CD8-positive, alpha-beta T cell (primary cell): ENCODE measurements at regions of chr10 and their contacts with region 1.

Region 1: GRCh38 chr10:100046021-100046486 is 35.6 kb downstream of the CPN1 start:
- DNase-seq: peak; percentile 58 to 87 (median 78)
- ATAC-seq: peak; percentile 67
- H3K4me3 ChIP-seq: no peak overlapping the region
- H3K4me3 Mint-ChIP-seq: no peak overlapping the region
- H3K27ac ChIP-seq: no peak overlapping the region
- H3K27ac Mint-ChIP-seq: no peak overlapping the region
- H3K4me1 ChIP-seq: no peaks in the 10 kb centered on the region
- H3K4me1 Mint-ChIP-seq: no peaks in the 10 kb centered on the region
- H3K27me3 ChIP-seq: no peaks in the 10 kb centered on the region
- H3K27me3 Mint-ChIP-seq: no peaks in the 10 kb centered on the region
- CTCF ChIP-seq: peak; percentile 83

Region 2: GRCh38 chr10:99834410-99834809 is 211.6 kb before region 1 on chr10:
- CTCF ChIA-PET with region 1: interaction called, 10 read pairs
- POLR2A ChIA-PET with region 1: no interaction called
- intact Hi-C with region 1: no loop called
- DNase-seq: no peak
- ATAC-seq: no peak
- H3K4me3 ChIP-seq: no peak overlapping the region
- H3K4me3 Mint-ChIP-seq: no peak overlapping the region
- H3K27ac ChIP-seq: no peak overlapping the region
- H3K27ac Mint-ChIP-seq: no peak overlapping the region
- H3K4me1 ChIP-seq: no peaks in the 10 kb centered on the region
- H3K4me1 Mint-ChIP-seq: no peaks in the 10 kb centered on the region
- H3K27me3 ChIP-seq: no peaks in the 10 kb centered on the region
- H3K27me3 Mint-ChIP-seq: no peaks in the 10 kb centered on the region
- CTCF ChIP-seq: no peak

Region 3: DNA sequence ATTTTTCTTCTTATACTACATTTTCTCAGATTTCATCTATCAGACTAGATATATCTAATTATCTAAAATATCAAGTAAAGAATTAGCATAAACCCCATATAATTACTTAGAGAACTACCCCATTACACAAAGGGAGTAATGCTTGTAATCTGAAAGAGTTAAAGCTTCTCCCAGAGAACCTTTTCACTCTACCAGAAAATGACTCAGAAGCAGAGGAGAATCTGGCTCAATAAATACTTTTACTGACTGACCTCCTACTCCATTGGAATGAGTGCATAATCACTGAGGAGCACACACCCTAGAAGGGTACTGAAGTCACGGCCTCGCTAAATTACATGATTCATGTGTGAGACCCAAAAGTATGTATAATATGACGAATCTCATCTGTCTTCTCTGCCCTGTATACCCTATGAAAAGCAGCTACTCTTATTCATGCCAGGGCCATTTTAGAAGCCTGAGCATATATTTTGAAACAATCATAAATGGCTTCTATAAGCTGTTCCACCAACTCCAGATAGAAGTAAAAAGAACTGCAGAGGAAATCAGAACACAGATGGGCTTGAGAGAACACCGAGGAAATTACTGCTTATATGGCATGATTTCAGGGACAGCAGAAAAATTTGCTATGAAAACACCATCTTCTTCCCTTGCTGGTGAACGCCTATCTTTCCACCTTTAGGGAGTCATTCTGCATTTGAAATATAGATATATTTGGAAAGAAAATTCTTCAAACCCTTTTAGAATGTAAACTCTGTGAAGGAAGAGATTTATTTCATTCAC is 69.0 kb before region 1 on chr10:
- CTCF ChIA-PET with region 1: interaction called, 6 read pairs
- POLR2A ChIA-PET with region 1: no interaction called
- intact Hi-C with region 1: loop called (anchors 1 to 5 kb)
- DNase-seq: no peak
- ATAC-seq: no peak
- H3K4me3 ChIP-seq: no peak overlapping the region
- H3K4me3 Mint-ChIP-seq: no peak overlapping the region
- H3K27ac ChIP-seq: no peak overlapping the region
- H3K27ac Mint-ChIP-seq: no peak overlapping the region
- H3K4me1 ChIP-seq: no peaks in the 10 kb centered on the region
- H3K4me1 Mint-ChIP-seq: no peaks in the 10 kb centered on the region
- H3K27me3 ChIP-seq: no peaks in the 10 kb centered on the region
- H3K27me3 Mint-ChIP-seq: no peaks in the 10 kb centered on the region
- CTCF ChIP-seq: no peak

Region 4: GRCh38 chr10:100020142-100020885 is 25.7 kb before region 1 on chr10:
- CTCF ChIA-PET with region 1: interaction called, 13 read pairs
- POLR2A ChIA-PET with region 1: no interaction called
- intact Hi-C with region 1: no loop called
- DNase-seq: peak in 2 of 9 experiments; percentile 10 to 33
- ATAC-seq: peak; percentile 62
- H3K4me3 ChIP-seq: no peak overlapping the region
- H3K4me3 Mint-ChIP-seq: no peak overlapping the region
- H3K27ac ChIP-seq: no peak overlapping the region
- H3K27ac Mint-ChIP-seq: peak overlapping the region; percentile 20
- H3K4me1 ChIP-seq: no peaks in the 10 kb centered on the region
- H3K4me1 Mint-ChIP-seq: peaks cover 5% of the 10 kb centered on the region
- H3K27me3 ChIP-seq: no peaks in the 10 kb centered on the region
- H3K27me3 Mint-ChIP-seq: peaks cover 3% of the 10 kb centered on the region
- CTCF ChIP-seq: no peak

Region 5: DNA sequence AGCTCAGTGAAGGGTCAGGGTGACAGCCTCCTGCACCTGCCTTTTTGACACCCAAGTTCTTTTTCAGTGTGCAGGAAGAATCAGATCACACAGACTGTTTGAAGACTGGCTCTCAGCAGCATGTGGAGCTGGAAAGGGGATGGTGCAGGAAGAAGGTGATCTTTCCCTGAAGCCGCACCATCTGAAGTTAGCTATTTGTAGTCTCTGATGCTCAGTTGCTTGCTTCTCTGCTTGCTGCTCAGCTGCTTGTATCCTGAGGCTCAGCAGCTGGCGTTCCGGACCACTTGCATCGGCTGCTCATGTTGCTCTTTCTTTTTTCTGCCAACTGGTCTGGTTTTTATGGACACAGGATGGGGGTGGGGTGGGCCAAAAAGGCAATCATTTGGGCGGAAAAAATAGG is 20.5 kb before region 1 on chr10:
- CTCF ChIA-PET with region 1: interaction called, 13 read pairs
- POLR2A ChIA-PET with region 1: no interaction called
- intact Hi-C with region 1: no loop called
- DNase-seq: no peak
- ATAC-seq: no peak
- H3K4me3 ChIP-seq: no peak overlapping the region
- H3K4me3 Mint-ChIP-seq: no peak overlapping the region
- H3K27ac ChIP-seq: no peak overlapping the region
- H3K27ac Mint-ChIP-seq: no peak overlapping the region
- H3K4me1 ChIP-seq: no peaks in the 10 kb centered on the region
- H3K4me1 Mint-ChIP-seq: peaks cover under 1% of the 10 kb centered on the region
- H3K27me3 ChIP-seq: peaks cover 0 to 2% of the 10 kb centered on the region in 2 experiments
- H3K27me3 Mint-ChIP-seq: peaks cover 4% of the 10 kb centered on the region
- CTCF ChIP-seq: no peak

Region 6: DNA sequence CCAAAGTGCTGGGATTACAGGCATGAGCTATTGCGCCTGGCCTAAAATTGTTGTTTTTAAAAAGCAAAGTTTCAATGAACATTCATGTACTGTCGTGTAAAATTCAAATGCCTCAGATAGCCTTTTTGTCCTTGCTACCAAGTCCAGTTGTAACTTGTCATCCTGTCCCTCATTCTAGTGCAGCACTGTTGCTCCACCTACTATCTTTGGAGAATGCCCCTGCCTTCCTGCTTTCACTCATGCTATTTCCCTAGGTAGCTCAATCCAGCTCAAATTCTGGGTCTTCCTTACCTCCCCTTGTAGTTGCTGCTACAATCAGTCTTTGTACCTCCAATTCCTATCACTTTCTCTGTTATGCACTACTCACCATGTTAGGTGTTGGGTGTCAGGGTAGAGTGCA is 38.8 kb after region 1 on chr10:
- CTCF ChIA-PET with region 1: no interaction called
- POLR2A ChIA-PET with region 1: no interaction called
- intact Hi-C with region 1: no loop called
- DNase-seq: no peak
- ATAC-seq: no peak
- H3K4me3 ChIP-seq: no peak overlapping the region
- H3K4me3 Mint-ChIP-seq: no peak overlapping the region
- H3K27ac ChIP-seq: no peak overlapping the region
- H3K27ac Mint-ChIP-seq: no peak overlapping the region
- H3K4me1 ChIP-seq: no peaks in the 10 kb centered on the region
- H3K4me1 Mint-ChIP-seq: no peaks in the 10 kb centered on the region
- H3K27me3 ChIP-seq: no peaks in the 10 kb centered on the region
- H3K27me3 Mint-ChIP-seq: peaks cover 28% of the 10 kb centered on the region
- CTCF ChIP-seq: no peak

Region 7: DNA sequence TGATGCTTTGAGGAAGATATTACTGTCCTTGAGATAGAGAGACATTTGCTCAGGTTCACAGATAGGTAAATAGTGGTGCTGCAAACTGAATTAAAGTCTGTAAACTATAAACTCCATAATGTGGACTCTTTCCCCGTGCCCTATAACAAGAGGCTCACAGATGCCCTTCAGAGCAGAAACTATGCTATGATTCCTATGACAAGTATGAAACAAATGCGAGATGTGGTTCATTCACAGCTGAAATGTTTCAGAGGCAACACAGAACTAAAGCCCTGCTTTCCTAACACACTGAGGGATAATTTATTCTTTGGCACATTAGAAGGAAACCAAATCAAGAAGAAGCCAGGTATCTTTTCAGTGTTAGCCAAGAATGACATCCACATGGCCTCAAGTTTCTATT is 170.0 kb after region 1 on chr10:
- CTCF ChIA-PET with region 1: no interaction called
- POLR2A ChIA-PET with region 1: no interaction called
- intact Hi-C with region 1: no loop called
- DNase-seq: no peak
- ATAC-seq: no peak
- H3K4me3 ChIP-seq: no peak overlapping the region
- H3K4me3 Mint-ChIP-seq: no peak overlapping the region
- H3K27ac ChIP-seq: no peak overlapping the region
- H3K27ac Mint-ChIP-seq: no peak overlapping the region
- H3K4me1 ChIP-seq: no peaks in the 10 kb centered on the region
- H3K4me1 Mint-ChIP-seq: no peaks in the 10 kb centered on the region
- H3K27me3 ChIP-seq: no peaks in the 10 kb centered on the region
- H3K27me3 Mint-ChIP-seq: no peaks in the 10 kb centered on the region
- CTCF ChIP-seq: no peak

Region 8: DNA sequence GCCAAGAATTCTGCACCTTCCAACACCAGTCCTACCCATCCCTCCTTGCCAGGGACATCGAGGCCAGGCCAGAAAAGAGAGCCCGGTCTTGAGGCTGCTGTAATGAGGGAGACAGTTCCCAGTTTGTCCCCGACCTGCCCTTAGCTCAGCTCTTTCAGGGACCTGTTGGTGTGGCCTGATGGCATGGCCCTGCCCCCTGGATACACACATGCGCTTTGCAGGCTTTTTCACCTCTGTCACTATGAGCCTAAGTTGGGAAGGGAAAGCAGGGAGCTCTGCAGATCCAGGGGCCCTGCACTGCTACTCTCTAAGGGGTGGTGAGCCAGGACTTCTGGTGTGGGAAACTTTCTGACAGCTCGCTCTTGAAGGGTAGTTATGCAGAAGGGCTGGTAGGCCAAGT is 303.0 kb after region 1 on chr10:
- CTCF ChIA-PET with region 1: no interaction called
- POLR2A ChIA-PET with region 1: no interaction called
- intact Hi-C with region 1: no loop called
- DNase-seq: no peak
- ATAC-seq: no peak
- H3K4me3 ChIP-seq: no peak overlapping the region
- H3K4me3 Mint-ChIP-seq: no peak overlapping the region
- H3K27ac ChIP-seq: no peak overlapping the region
- H3K27ac Mint-ChIP-seq: no peak overlapping the region
- H3K4me1 ChIP-seq: peaks cover 6% of the 10 kb centered on the region
- H3K4me1 Mint-ChIP-seq: peaks cover 31% of the 10 kb centered on the region
- H3K27me3 ChIP-seq: no peaks in the 10 kb centered on the region
- H3K27me3 Mint-ChIP-seq: no peaks in the 10 kb centered on the region
- CTCF ChIP-seq: no peak